Sciatic nerve (tissue), 2 donors: ENCODE measurements at regions of chr12 and their contacts with region 1.

Region 1: DNA sequence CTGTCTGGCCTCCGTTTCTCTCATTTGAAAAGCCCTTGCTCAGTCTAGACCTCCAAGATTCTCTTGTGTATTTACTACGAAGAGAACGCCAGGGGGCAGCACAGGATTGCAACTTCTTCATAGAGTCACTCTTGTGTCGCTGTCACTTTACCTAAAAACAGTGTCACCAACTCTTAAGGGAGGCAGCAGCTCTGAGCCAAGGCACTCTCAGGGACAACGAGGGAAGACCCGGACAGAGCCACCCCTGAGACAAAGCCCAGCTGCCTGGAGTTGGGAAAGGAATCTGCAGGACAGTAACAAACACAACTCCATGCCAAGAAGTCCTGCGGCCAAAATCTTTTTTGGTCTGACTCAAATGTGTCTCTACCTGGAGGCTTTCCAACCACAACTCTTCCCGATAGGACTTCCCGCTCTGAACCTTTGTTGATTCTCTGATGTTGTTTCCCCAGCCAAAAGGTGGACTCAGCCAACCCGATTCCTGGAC is 9.6 kb upstream of the RPAP3 start:
- DNase-seq: peak; percentile 90
- ATAC-seq: peak; percentile 71

Region 2: GRCh38 chr12:47602325-47602724 is 113.1 kb before region 1 on chr12:
- intact Hi-C with region 1: no loop called
- DNase-seq: no peak
- ATAC-seq: peak; percentile 62

Region 3: DNA sequence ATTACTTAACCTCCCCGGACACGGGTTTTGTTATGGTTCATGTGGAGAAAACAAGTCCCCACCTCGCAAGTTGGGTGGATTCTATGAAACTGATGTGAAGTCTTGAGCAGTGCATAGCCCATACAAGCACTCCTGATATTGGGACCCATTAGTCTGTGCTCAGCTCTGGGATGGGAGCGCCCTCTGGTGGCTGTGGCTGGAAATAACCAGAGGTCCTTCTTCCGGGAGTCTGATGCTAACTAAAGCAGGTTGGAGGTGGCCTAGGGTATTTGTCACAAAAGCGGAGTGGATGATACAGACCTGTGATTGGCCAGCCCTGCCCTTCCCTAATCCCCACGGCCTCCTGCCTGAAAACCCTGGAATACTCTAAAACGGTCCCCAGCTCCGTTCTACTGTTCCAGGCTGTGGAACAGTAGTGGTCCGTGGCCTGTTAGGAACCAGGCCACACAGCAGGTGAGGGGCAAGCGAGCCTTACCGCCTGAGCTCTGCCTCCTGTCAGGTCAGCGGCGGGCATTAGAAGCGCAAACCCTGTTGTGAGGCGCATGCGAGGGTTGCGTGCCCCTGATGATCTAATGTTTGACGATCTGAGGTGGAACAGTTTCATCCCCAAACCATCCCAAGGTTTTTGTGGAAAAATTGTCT is 64.0 kb after region 1 on chr12:
- intact Hi-C with region 1: loop called (anchors 5 kb)
- DNase-seq: peak; percentile 96
- ATAC-seq: peak; percentile 81

Region 4: GRCh38 chr12:48061948-48062719 is 346.7 kb after region 1 on chr12:
- intact Hi-C with region 1: loop called (anchors 10 kb)
- DNase-seq: no peak
- ATAC-seq: no peak